ENCODE measurements at regions of chr4 and their contacts with region 1.

Region 1: DNA sequence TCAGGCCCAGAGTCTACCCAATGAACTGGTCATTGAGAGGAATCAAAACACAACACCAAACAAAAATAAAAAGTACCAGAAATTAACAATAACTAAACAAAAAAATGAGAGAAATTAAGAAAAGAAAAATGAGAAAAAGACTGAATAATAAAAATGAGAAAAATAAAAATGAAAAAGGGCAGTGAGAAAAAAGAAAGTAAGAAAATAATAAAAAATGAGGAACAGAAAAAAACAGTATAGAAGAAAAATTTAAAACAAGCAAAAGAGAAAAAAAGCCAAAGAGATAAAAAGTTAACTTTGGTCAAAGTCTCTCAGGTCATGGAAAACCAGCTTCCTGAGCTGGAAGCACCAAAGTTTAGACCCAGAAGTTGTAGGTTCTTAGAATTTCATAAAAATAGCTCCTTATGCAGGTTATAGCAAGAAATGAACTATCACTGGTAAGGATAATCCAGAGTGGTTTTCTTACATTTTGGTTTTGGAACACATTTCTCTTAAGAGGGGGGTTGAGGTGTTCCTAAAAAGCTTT is 51.0 kb upstream of the WDR17 start:
- H3K4me3 ChIP-seq: no peak overlapping the region
- H3K27ac ChIP-seq: no peak overlapping the region
- H3K4me1 ChIP-seq: no peaks in the 10 kb centered on the region
- CTCF ChIP-seq: no peak

Region 2: DNA sequence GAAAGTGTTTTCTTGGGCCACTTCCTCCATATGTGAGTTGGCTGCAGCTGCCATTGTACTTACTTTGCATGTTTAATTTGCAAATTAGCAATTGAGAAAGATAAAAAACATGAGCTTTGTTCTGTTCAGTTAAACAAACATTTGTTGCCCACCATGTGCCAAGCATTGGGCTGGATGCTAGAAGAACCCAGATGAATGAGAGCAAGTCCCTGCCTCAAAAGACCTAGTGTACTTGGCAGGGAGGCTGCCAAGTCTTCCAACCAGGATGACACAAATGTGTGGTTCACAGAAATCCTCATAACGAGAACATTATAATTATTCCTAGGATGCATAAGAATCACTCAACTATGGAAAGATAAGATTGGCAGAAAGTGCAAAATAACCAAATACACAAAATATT is 269.3 kb before region 1 on chr4:
- CTCF ChIA-PET with region 1: interaction called, 12 read pairs
- POLR2A ChIA-PET with region 1: no interaction called
- H3K4me3 ChIP-seq: no peak overlapping the region
- H3K27ac ChIP-seq: no peak overlapping the region
- H3K4me1 ChIP-seq: no peaks in the 10 kb centered on the region
- CTCF ChIP-seq: no peak

Region 3: GRCh38 chr4:175971388-175972179 is 43.1 kb before region 1 on chr4:
- CTCF ChIA-PET with region 1: no interaction called
- POLR2A ChIA-PET with region 1: no interaction called
- H3K4me3 ChIP-seq: no peak overlapping the region
- H3K27ac ChIP-seq: no peak overlapping the region
- H3K4me1 ChIP-seq: no peaks in the 10 kb centered on the region
- CTCF ChIP-seq: no peak

Measured in HEK293 (cell line).